Heart left ventricle (tissue), 16 donors: ENCODE measurements at regions of chr11 and their contacts with region 1.

Region 1: DNA sequence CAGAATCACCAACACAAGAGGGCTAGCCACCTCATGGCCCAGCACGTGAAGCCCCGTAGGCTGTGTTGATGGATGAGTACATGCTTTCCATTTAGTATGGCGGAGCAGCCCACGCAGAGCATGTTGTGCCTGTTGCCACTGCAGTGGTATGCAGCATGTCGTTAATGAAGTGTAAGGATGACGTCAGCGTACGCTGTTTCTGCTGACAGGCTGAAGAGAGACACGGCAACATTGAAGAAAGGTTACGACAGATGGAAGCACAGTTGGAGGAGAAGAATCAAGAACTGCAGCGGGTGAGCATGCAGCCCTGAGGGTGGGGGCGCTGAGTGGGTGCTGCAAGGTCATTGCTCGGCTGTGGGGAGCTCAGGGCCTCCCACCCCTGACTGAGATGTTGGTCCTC is 62.8 kb downstream of the PPFIA1 start:
- DNase-seq: no peak
- ATAC-seq: peak in 3 of 4 donors; percentile 38 to 57 (median 48)
- H3K4me3 ChIP-seq: no peak overlapping the region
- H3K27ac ChIP-seq: no peak overlapping the region
- H3K4me1 ChIP-seq: peaks cover 0 to 5% (median 0%) of the 10 kb centered on the region in 12 donors
- H3K27me3 ChIP-seq: no peaks in the 10 kb centered on the region
- CTCF ChIP-seq: no peak
- POLR2A ChIP-seq: no peak

Region 2: DNA sequence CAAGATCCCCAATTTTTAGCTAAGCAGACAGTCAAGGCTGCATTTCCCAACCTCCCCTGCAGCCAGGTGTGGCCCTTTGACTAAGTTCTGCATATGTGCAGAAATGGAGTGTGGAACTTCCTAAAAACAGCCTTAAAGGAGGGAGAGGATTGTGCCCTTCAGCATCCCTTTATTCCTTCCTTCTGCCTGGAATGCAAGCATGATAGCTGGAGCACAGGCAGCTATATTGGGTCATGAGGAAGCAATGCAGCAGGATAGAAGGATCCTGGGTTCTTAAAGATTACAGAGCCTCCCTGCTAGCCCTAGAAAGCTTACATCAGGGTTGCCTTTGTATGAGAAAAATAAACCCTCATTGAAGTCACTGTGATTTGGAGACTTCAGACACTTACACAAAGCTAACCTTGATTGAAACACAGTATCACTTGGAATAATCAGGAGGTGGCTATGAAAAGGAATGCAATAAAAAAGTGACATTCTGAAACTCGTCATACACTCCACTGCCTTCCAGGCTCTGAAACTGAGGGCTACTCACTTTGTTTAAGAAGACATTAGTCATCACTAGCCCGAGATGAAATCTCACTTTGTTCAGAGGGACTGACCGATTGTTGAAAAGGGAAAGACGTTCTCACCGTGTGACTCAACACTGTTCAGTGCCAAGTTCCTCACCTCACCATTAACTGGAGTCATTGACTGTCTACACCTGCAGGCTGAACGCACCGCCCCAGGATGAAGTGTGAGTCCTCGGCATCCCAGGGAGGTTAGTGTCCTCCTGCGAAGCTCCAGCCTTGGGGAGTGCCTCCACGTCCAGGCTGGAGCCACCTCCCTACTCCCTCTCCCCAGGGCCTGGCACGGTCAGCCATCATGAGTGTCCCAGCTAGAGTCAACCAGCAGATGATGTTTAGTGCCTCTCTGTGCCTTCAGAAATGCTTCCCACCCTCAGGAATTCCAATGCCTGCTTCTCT is 99.9 kb before region 1 on chr11:
- intact Hi-C with region 1: no loop called
- DNase-seq: no peak
- ATAC-seq: no peak
- H3K4me3 ChIP-seq: no peak overlapping the region
- H3K27ac ChIP-seq: no peak overlapping the region
- H3K4me1 ChIP-seq: peaks cover 0 to 14% (median 7%) of the 10 kb centered on the region in 12 donors
- H3K27me3 ChIP-seq: no peaks in the 10 kb centered on the region
- CTCF ChIP-seq: no peak
- POLR2A ChIP-seq: no peak

Region 3: GRCh38 chr11:70364745-70365543 is 31.7 kb after region 1 on chr11:
- intact Hi-C with region 1: no loop called
- DNase-seq: no peak
- ATAC-seq: no peak
- H3K4me3 ChIP-seq: no peak overlapping the region
- H3K27ac ChIP-seq: peak overlapping the region in 2 of 12 donors; percentile 27 to 33
- H3K4me1 ChIP-seq: peaks cover 0 to 15% (median 0%) of the 10 kb centered on the region in 12 donors
- H3K27me3 ChIP-seq: no peaks in the 10 kb centered on the region
- CTCF ChIP-seq: no peak
- POLR2A ChIP-seq: no peak

Region 4: DNA sequence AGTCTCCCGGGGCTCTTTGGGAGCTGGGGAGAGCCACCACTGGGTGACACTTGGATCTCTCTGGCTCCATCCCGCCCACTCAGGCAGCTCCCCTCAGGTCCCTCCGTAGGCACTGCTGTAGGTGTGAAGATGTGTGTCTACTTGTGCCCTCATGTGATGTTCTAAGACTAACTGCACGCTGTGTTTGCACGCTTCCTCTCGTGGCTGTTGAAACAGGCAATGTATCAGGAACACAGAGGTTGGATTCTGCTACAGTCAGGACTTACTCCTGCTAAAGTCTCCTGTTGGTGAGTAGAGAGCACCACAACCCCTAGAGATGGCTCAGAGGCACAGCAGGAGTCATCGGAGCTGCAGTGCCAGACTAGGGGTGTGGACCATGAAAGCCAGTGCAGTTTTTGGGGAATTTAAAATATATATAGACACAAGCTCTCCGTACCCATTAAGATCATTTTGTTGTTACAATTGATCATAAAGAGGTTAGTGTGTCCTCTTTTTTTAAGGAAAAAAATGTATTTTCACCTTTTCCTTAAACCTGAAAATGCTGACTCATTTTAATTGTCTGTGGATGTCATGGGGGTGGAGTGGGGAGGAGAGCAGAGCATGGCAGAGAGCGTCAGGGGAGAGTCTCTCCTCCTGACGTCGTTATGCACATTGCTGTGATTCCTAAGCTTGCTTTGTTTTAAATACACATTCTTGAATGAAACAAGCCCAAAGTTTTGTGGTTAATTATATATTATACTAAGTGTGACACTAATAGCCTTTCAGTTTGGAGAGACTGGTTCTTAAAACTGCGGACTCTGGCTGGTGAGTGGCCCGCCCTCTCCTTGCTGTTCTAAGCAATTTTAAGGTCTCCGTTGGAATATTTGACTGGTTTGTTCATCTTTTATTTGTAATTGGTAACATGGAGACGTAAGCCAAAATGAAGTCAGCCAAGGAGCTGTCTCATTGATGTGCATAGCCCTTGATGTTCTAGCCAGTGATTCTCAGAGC is 48.9 kb after region 1 on chr11:
- intact Hi-C with region 1: no loop called
- DNase-seq: no peak
- ATAC-seq: peak in 1 of 4 donors; percentile 40
- H3K4me3 ChIP-seq: no peak overlapping the region
- H3K27ac ChIP-seq: peak overlapping the region in 1 of 12 donors; percentile 35
- H3K4me1 ChIP-seq: no peaks in the 10 kb centered on the region
- H3K27me3 ChIP-seq: no peaks in the 10 kb centered on the region
- CTCF ChIP-seq: no peak
- POLR2A ChIP-seq: no peak

Region 5: GRCh38 chr11:70410276-70411205 is 77.3 kb after region 1 on chr11:
- intact Hi-C with region 1: loop called in 1 of 10 experiments (anchors 2 kb)
- DNase-seq: peak; percentile 81 to 94 (median 87)
- ATAC-seq: peak; percentile 89 to 94 (median 92)
- H3K4me3 ChIP-seq: no peak overlapping the region
- H3K27ac ChIP-seq: peak overlapping the region in 10 of 12 donors; percentile 25 to 83 (median 52)
- H3K4me1 ChIP-seq: peaks cover 0 to 55% (median 10%) of the 10 kb centered on the region in 12 donors
- H3K27me3 ChIP-seq: peaks cover 0 to 52% (median 0%) of the 10 kb centered on the region in 9 donors
- CTCF ChIP-seq: no peak
- POLR2A ChIP-seq: no peak